ENCODE measurements at regions of chr11 and their contacts with region 1.

Region 1: DNA sequence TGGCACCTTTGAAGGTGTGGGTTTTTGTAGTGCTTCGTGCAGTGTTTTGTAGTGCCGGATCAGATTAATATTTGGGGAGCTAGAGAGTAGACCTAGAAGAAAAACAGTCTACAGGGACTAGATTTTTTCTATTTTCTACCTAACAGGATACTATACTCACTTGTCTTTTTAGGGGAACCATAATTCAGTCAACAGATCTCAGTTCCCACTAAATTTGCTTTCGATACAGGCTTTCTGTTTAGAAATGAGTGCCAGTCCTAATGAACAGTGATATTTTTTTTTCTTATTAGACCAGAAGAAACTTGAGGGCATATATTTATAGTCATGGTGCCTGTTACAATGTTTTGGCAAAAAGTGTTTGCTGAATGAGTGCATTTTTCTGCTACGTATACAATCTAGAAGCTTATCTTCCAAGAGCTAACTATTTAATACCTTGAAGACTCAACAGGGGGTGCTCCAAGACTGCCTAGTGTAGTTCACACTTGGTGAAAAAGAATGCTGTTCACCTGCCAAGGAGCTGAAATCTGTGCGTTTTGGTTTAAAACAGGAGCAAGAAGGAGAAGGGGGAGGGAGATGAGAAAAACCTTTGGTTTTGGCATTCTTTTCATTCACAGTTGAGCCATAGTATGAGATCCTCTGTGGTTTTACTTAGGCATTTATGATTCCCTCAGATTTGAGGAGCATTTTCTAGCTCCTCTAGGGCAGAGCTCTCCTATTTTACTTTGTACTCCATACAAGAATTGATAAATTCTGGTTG is 44.9 kb upstream of the VSTM5 start:
- DNase-seq: peak; percentile 95
- ATAC-seq: peak; percentile 98
- H3K4me3 ChIP-seq: no peak overlapping the region
- H3K27ac ChIP-seq: no peak overlapping the region
- H3K4me1 ChIP-seq: no peaks in the 10 kb centered on the region
- H3K27me3 ChIP-seq: no peaks in the 10 kb centered on the region
- CTCF ChIP-seq: peak; percentile 97

Region 2: DNA sequence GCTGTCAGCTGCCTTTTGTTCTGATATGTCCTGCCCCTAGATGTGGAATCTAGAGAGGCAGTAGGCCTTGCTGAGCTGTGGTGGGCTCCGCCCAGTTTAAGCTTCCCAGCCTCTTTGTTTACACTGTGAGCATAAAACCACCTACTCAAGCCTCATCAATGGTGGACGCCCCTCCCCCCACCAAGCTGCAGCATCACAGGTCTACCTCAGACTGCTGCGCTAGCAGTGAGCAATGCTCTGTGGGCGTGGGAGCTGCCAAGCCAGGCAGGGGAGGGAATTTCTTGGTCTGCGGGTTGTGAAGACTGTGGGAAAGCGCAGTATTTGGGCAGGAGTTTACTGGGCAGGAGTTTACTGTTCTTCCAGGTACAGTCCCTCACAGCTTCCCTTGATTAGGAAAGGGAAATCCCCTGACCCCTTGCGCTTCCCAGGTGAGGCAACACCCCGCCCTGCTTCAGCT is 450.6 kb before region 1 on chr11:
- CTCF ChIA-PET with region 1: no interaction called
- POLR2A ChIA-PET with region 1: no interaction called
- intact Hi-C with region 1: no loop called
- DNase-seq: peak; percentile 96
- ATAC-seq: peak; percentile 96
- H3K4me3 ChIP-seq: peak overlapping the region; percentile 12; the same call in 1 of the 2 replicates
- H3K27ac ChIP-seq: peak overlapping the region; percentile 72
- H3K4me1 ChIP-seq: peaks cover 15% of the 10 kb centered on the region
- H3K27me3 ChIP-seq: no peaks in the 10 kb centered on the region
- CTCF ChIP-seq: no peak

Region 3: DNA sequence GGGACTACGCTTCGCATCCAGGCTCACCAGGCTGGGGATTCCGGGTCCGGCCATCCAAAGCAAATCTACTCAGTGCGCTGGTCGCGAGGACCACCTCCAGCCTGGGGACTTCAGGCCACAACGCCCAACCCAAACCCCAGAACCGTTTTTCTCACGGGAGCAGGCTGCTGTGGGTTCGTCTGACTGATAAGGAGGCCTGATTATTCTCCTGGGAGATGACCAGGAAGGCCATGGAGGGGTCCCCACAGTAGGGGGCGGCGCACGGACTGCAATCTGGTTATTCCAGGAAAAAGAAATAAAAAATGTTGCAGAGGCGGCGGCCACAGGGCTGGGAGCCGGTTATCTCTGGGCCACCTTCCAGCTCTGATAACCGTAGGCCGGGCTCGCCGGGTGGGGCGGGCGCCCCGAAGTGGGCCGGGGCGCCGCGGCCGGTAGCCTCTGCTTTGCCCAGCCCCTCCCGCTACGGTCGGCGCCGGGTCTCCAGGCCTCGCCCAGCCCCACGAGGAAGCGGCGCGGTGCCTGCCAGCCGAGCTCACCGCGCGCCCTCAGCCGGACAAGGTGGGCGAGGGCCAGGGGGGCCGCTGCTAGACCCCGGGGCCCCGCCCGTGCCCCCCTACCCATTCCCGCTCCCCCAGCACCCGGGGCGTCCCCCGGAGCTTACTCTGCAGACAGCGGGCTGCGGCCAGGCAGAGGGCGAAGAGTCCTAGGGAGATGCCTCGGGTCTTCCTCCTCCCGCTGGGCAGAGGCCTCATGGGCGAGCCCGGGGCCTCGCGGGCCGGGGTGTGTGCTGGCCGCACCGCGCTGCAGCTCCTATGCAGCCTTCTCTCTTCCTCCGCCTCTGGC is 45.3 kb before region 1 on chr11:
- CTCF ChIA-PET with region 1: interaction called, 14 read pairs
- POLR2A ChIA-PET with region 1: interaction called, 6 read pairs
- intact Hi-C with region 1: loop called (anchors 5 kb)
- DNase-seq: peak; percentile 30
- ATAC-seq: peak; percentile 75
- H3K4me3 ChIP-seq: peak overlapping the region; percentile 81
- H3K27ac ChIP-seq: peak overlapping the region; percentile 88
- H3K4me1 ChIP-seq: peaks cover 38% of the 10 kb centered on the region
- H3K27me3 ChIP-seq: no peaks in the 10 kb centered on the region
- CTCF ChIP-seq: peak; percentile 38; the same call in 1 of the 2 replicates

Region 4: GRCh38 chr11:93908689-93909088 is 13.4 kb after region 1 on chr11:
- CTCF ChIA-PET with region 1: interaction called, 18 read pairs
- POLR2A ChIA-PET with region 1: interaction called, 5 read pairs
- intact Hi-C with region 1: no loop called
- DNase-seq: peak; percentile 93
- ATAC-seq: peak; percentile 64
- H3K4me3 ChIP-seq: no peak overlapping the region
- H3K27ac ChIP-seq: peak overlapping the region; percentile 72
- H3K4me1 ChIP-seq: peaks cover 47% of the 10 kb centered on the region
- H3K27me3 ChIP-seq: no peaks in the 10 kb centered on the region
- CTCF ChIP-seq: no peak

Region 5: GRCh38 chr11:94036096-94036495 is 140.8 kb after region 1 on chr11:
- CTCF ChIA-PET with region 1: no interaction called
- POLR2A ChIA-PET with region 1: no interaction called
- intact Hi-C with region 1: no loop called
- DNase-seq: peak; percentile 50
- ATAC-seq: peak; percentile 81
- H3K4me3 ChIP-seq: no peak overlapping the region
- H3K27ac ChIP-seq: no peak overlapping the region
- H3K4me1 ChIP-seq: peaks cover 8% of the 10 kb centered on the region; the same call in 1 of the 2 replicates
- H3K27me3 ChIP-seq: no peaks in the 10 kb centered on the region
- CTCF ChIP-seq: peak; percentile 48

Region 6: GRCh38 chr11:94107363-94107762 is 212.1 kb after region 1 on chr11:
- CTCF ChIA-PET with region 1: interaction called, 5 read pairs
- POLR2A ChIA-PET with region 1: no interaction called
- intact Hi-C with region 1: loop called (anchors 1 kb)
- DNase-seq: peak; percentile 42
- ATAC-seq: peak; percentile 51
- H3K4me3 ChIP-seq: no peak overlapping the region
- H3K27ac ChIP-seq: no peak overlapping the region
- H3K4me1 ChIP-seq: no peaks in the 10 kb centered on the region
- H3K27me3 ChIP-seq: no peaks in the 10 kb centered on the region
- CTCF ChIP-seq: peak; percentile 58

Region 7: GRCh38 chr11:94171693-94172440 is 276.6 kb after region 1 on chr11:
- CTCF ChIA-PET with region 1: no interaction called
- POLR2A ChIA-PET with region 1: no interaction called
- intact Hi-C with region 1: loop called (anchors 5 kb)
- DNase-seq: peak; percentile 60
- ATAC-seq: peak; percentile 73; the same call in 1 of the 2 replicates
- H3K4me3 ChIP-seq: no peak overlapping the region
- H3K27ac ChIP-seq: no peak overlapping the region
- H3K4me1 ChIP-seq: no peaks in the 10 kb centered on the region
- H3K27me3 ChIP-seq: no peaks in the 10 kb centered on the region
- CTCF ChIP-seq: peak; percentile 96

Region 8: GRCh38 chr11:94504689-94505293 is 609.5 kb after region 1 on chr11:
- CTCF ChIA-PET with region 1: interaction called, 13 read pairs
- POLR2A ChIA-PET with region 1: no interaction called
- intact Hi-C with region 1: loop called (anchors 1 kb)
- DNase-seq: peak; percentile 90
- ATAC-seq: peak; percentile 62
- H3K4me3 ChIP-seq: no peak overlapping the region
- H3K27ac ChIP-seq: no peak overlapping the region
- H3K4me1 ChIP-seq: no peaks in the 10 kb centered on the region; the same call in 1 of the 2 replicates
- H3K27me3 ChIP-seq: no peaks in the 10 kb centered on the region
- CTCF ChIP-seq: peak; percentile 86